ENCODE measurements at regions of chr11 and their contacts with region 1.

Region 1: DNA sequence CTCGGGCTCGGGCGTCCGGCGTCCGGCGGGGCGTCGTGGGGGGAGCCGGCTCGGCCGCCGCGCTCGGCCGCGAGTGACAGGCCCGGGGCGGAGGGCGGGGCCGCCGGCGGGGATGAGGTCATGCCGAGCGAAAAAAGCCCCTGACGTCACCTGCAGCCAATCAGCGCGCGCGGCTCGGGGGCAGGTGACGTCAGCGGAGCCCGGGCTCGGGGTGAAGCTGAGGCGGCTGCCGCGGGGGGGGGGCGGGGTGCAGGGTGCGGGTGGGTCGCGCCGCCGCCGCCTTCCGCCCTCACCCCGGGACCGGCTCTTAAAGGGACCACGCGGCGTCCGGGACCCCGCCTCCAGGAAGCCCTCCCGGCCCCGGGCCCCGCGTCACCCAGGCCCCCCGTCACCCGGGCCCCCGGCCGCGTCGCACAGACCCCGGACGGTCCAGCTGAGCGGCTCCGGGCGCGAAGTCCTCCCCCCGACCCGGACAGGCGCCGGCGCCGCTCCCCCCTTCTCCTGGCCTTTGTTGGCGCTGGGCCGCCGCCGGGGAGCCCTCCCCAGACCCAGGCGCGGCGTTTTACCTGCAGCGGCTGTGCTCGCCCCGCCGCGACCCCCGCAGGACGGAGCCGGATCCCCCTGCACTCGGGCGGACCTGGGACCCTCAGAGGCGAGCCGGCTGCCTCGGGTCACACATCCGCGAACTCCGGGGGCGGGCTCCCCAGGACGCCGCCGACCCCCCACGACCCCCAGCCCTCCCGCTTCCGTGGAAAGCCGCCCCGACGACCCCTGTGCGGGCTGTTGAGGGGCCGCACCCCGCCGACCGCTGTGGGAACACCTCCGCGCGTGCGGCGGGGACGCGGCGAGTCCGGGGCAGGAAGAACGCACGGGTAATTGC is at the start of gene DUSP8:
- DNase-seq: peak; percentile 65 to 96
- H3K4me3 ChIP-seq: peak within 1 kb of the TSS; percentile 57 to 93
- H3K27ac ChIP-seq: peak within 1 kb of the TSS; percentile 80 to 87
- H3K4me1 ChIP-seq: peaks cover 21 to 27% of the 10 kb centered on the region in 2 donors
- H3K27me3 ChIP-seq: no peaks in the 10 kb centered on the region
- CTCF ChIP-seq: no peak
- total RNA-seq, gene DUSP8: 27.0 TPM

Region 2: GRCh38 chr11:506238-506994 is 1066.0 kb before region 1 on chr11:
- intact Hi-C with region 1: loop called (anchors 5 kb)
- DNase-seq: peak; percentile 76 to 98
- H3K4me3 ChIP-seq: peak overlapping the region; percentile 83 to 85
- H3K27ac ChIP-seq: peak overlapping the region; percentile 99 to 100
- H3K4me1 ChIP-seq: peaks cover 15 to 37% of the 10 kb centered on the region in 2 donors
- H3K27me3 ChIP-seq: no peaks in the 10 kb centered on the region
- CTCF ChIP-seq: peak in 2 of 3 experiments; percentile 8 to 23

Region 3: GRCh38 chr11:1262172-1263006 is 310.0 kb before region 1 on chr11:
- intact Hi-C with region 1: loop called (anchors 5 kb)
- DNase-seq: peak; percentile 67 to 94
- H3K4me3 ChIP-seq: peak overlapping the region; percentile 44 to 67
- H3K27ac ChIP-seq: peak overlapping the region; percentile 62 to 83
- H3K4me1 ChIP-seq: peaks cover 6 to 12% of the 10 kb centered on the region in 2 donors
- H3K27me3 ChIP-seq: no peaks in the 10 kb centered on the region
- CTCF ChIP-seq: no peak

Region 4: GRCh38 chr11:1326435-1327063 is 245.9 kb before region 1 on chr11:
- intact Hi-C with region 1: no loop called
- DNase-seq: no peak
- H3K4me3 ChIP-seq: no peak overlapping the region
- H3K27ac ChIP-seq: no peak overlapping the region
- H3K4me1 ChIP-seq: no peaks in the 10 kb centered on the region
- H3K27me3 ChIP-seq: no peaks in the 10 kb centered on the region
- CTCF ChIP-seq: no peak

Region 5: GRCh38 chr11:1422481-1422880 is 150.0 kb before region 1 on chr11:
- intact Hi-C with region 1: no loop called
- DNase-seq: no peak
- H3K4me3 ChIP-seq: no peak overlapping the region
- H3K27ac ChIP-seq: no peak overlapping the region
- H3K4me1 ChIP-seq: no peaks in the 10 kb centered on the region
- H3K27me3 ChIP-seq: no peaks in the 10 kb centered on the region
- CTCF ChIP-seq: no peak

Region 6: GRCh38 chr11:1482581-1483444 is 89.6 kb before region 1 on chr11:
- intact Hi-C with region 1: loop called (anchors 5 kb)
- DNase-seq: peak; percentile 30 to 83
- H3K4me3 ChIP-seq: peak overlapping the region in 1 of 2 donors; percentile 62
- H3K27ac ChIP-seq: peak overlapping the region; percentile 87 to 98
- H3K4me1 ChIP-seq: peaks cover 50 to 83% of the 10 kb centered on the region in 2 donors
- H3K27me3 ChIP-seq: no peaks in the 10 kb centered on the region
- CTCF ChIP-seq: peak; percentile 22 to 46 (median 31)

Region 7: GRCh38 chr11:1559119-1559951 is 13.1 kb before region 1 on chr11:
- intact Hi-C with region 1: loop called (anchors 1 kb)
- DNase-seq: peak; percentile 90 to 99
- H3K4me3 ChIP-seq: peak overlapping the region; percentile 31 to 47
- H3K27ac ChIP-seq: peak overlapping the region; percentile 93 to 98
- H3K4me1 ChIP-seq: peaks cover 15 to 36% of the 10 kb centered on the region in 2 donors
- H3K27me3 ChIP-seq: no peaks in the 10 kb centered on the region
- CTCF ChIP-seq: peak in 1 of 3 experiments; percentile 21

Region 8: GRCh38 chr11:1628506-1629325 is 56.3 kb after region 1 on chr11:
- intact Hi-C with region 1: no loop called
- DNase-seq: no peak
- H3K4me3 ChIP-seq: no peak overlapping the region
- H3K27ac ChIP-seq: no peak overlapping the region
- H3K4me1 ChIP-seq: no peaks in the 10 kb centered on the region
- H3K27me3 ChIP-seq: no peaks in the 10 kb centered on the region
- CTCF ChIP-seq: peak; percentile 64 to 84 (median 76)

Region 9: GRCh38 chr11:1827095-1827813 is 254.8 kb after region 1 on chr11:
- intact Hi-C with region 1: loop called (anchors 10 kb)
- DNase-seq: peak; percentile 51 to 93
- H3K4me3 ChIP-seq: peak overlapping the region in 1 of 2 donors; percentile 38
- H3K27ac ChIP-seq: peak overlapping the region; percentile 94 to 96
- H3K4me1 ChIP-seq: peaks cover 60 to 76% of the 10 kb centered on the region in 2 donors
- H3K27me3 ChIP-seq: no peaks in the 10 kb centered on the region
- CTCF ChIP-seq: peak in 1 of 3 experiments; percentile 13